Activated T-helper 1 cell treated with anti-CD3 and anti-CD28 coated beads, Interleukin-12 subunit alpha, Interleukin-12 subunit beta, Interleukin-2, Interleukin-4 antibody, amounts not matched to agents 30 ng/mL and 10 ng/mL and 1 ng/mL, durations not matched to agents 14 hours and 24 hours and 36 hours (primary cell): ENCODE measurements at regions of chr2 and their contacts with region 1.

Region 1: DNA sequence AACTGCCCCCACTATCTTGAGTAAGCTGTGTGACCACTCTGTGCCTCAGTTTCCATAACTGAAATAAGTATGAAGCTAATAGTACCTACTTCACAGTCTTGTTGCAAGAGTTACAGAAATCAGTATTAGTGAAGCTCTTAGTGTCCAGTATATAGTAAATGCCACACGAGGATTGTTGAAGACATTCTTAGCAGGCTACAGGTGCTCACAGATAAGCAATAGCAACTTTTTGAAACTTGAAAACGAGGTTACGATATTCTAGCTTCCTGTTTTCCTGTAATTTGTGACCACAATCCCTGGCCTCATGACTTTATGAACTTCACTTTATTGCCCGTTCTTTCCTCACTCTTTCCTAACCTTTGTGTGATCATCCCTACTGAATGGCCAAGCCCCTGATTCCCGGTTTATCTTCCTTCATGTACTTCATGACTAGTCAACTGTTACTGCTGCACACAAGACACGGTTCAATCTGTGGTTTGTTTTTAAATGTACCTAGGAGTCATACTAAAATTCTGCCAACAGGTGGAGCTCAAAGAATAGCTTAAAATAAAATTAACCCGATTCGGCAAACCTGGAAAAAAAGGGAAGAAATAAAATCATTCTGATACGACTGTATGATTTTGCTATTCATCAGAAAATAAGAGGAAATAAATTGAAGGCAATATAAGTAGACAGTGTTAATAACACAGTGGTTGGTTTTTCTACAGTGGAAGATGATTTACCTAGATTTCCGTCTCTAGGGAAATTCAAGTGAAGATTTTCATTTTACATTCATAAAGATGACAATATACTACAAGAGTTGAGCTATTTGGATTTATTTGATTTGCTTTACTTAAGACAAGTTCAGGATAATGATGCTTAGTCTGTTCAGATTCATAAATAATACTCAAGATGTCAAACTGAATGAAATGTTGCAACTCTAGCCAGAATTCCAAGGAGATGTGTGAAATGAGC is 38.1 kb upstream of the STAT1 start:
- DNase-seq: no peak
- H3K4me3 Mint-ChIP-seq: no peak overlapping the region
- H3K27ac Mint-ChIP-seq: no peak overlapping the region
- H3K4me1 Mint-ChIP-seq: peaks cover 25% of the 10 kb centered on the region
- H3K27me3 Mint-ChIP-seq: no peaks in the 10 kb centered on the region

Region 2: GRCh38 chr2:191245046-191245868 is 193.2 kb after region 1 on chr2 and contains the start of gene MYO1B:
- intact Hi-C with region 1: loop called (anchors 2 kb)
- DNase-seq: peak; percentile 58
- H3K4me3 Mint-ChIP-seq: peak within 1 kb of the TSS; percentile 77
- H3K27ac Mint-ChIP-seq: peak within 1 kb of the TSS; percentile 49
- H3K4me1 Mint-ChIP-seq: peaks cover 23% of the 10 kb centered on the region
- H3K27me3 Mint-ChIP-seq: peaks cover 5% of the 10 kb centered on the region
- total RNA-seq, gene MYO1B: 13.2 and 15.2 TPM in 2 replicates

Region 3: DNA sequence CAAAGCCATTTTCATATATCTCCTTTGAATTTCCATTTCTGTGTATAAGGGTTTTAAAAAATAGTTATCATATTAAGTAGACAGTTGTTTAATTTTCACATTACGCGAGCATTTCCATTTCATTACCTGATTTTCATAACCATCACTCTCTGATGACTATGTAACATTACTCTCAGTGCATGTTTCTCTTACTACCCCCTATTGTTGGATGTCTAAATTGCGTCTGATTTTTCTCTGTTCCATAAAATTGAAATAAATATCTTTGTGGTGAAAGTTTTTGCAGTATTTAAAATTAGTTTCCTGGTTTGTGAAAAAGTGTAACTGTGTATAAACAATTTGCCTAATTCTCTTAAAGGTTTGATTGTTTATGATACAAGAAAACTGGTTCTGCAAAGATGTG is 316.9 kb after region 1 on chr2:
- intact Hi-C with region 1: loop called (anchors 1 kb)
- DNase-seq: no peak
- H3K4me3 Mint-ChIP-seq: no peak overlapping the region
- H3K27ac Mint-ChIP-seq: no peak overlapping the region
- H3K4me1 Mint-ChIP-seq: no peaks in the 10 kb centered on the region
- H3K27me3 Mint-ChIP-seq: no peaks in the 10 kb centered on the region

Region 4: GRCh38 chr2:191521608-191522208 is 469.6 kb after region 1 on chr2:
- intact Hi-C with region 1: loop called (anchors 1 kb)
- DNase-seq: no peak
- H3K4me3 Mint-ChIP-seq: no peak overlapping the region
- H3K27ac Mint-ChIP-seq: no peak overlapping the region
- H3K4me1 Mint-ChIP-seq: no peaks in the 10 kb centered on the region
- H3K27me3 Mint-ChIP-seq: peaks cover 5% of the 10 kb centered on the region

Region 5: GRCh38 chr2:191740016-191740419 is 687.9 kb after region 1 on chr2:
- intact Hi-C with region 1: loop called (anchors 10 kb)
- DNase-seq: peak; percentile 64
- H3K4me3 Mint-ChIP-seq: peak overlapping the region; percentile 2
- H3K27ac Mint-ChIP-seq: peak overlapping the region; percentile 45
- H3K4me1 Mint-ChIP-seq: peaks cover 18% of the 10 kb centered on the region
- H3K27me3 Mint-ChIP-seq: peaks cover 25% of the 10 kb centered on the region